ENCODE measurements at regions of chr10 and their contacts with region 1.

Region 1: DNA sequence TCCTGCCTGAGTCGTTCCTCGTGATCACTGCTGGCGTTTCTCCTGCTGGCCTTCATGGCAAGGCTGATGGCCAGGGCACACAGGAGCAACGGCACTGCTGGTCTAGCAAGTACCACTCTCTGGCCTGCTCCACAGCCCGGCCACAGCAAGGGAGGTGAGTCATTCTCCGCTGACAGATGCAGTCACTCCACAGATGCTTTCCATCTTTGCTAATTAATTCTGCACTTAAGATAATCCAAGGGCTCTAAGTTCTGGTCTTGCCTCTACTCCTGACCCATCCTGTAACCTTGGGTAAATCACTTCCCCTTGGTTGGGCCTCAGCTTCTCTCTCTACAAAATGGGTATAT is 244.4 kb downstream of the RPS24 start:
- DNase-seq: no peak
- H3K4me3 ChIP-seq: no peak overlapping the region
- H3K27ac ChIP-seq: no peak overlapping the region
- H3K4me1 ChIP-seq: no peaks in the 10 kb centered on the region
- H3K27me3 ChIP-seq: no peaks in the 10 kb centered on the region
- CTCF ChIP-seq: no peak
- EP300 ChIP-seq: no peak
- POLR2A ChIP-seq: no peak

Region 2: DNA sequence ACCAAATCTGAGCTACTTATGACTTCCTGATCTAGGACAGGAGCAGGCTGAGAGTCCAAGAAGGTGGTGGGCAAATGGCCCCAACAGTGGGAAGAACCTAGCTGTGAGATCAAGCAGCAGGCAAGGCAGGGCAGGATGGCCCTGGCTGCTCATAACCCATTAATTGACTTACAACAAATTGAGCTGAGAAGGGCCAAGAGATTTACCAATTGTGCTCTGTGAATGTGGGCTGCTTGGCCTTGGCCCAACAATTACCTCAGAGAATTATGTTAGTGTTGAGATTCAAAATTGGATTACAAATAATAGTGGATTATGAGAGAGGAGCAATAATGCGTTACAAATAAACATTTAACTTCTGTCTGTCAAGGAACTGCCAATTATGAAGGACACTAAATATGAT is 1596.9 kb before region 1 on chr10:
- in situ Hi-C with region 1: no loop called
- intact Hi-C with region 1: loop called (anchors 10 kb)
- DNase-seq: no peak
- H3K4me3 ChIP-seq: no peak overlapping the region
- H3K27ac ChIP-seq: no peak overlapping the region
- H3K4me1 ChIP-seq: no peaks in the 10 kb centered on the region
- H3K27me3 ChIP-seq: no peaks in the 10 kb centered on the region
- CTCF ChIP-seq: no peak
- EP300 ChIP-seq: no peak
- POLR2A ChIP-seq: no peak